ENCODE measurements at regions of chr10 and their contacts with region 1.

Region 1: GRCh38 chr10:29865700-29866340 is 193.6 kb downstream of the JCAD start:
- DNase-seq: no peak
- ATAC-seq: no peak

Region 2: DNA sequence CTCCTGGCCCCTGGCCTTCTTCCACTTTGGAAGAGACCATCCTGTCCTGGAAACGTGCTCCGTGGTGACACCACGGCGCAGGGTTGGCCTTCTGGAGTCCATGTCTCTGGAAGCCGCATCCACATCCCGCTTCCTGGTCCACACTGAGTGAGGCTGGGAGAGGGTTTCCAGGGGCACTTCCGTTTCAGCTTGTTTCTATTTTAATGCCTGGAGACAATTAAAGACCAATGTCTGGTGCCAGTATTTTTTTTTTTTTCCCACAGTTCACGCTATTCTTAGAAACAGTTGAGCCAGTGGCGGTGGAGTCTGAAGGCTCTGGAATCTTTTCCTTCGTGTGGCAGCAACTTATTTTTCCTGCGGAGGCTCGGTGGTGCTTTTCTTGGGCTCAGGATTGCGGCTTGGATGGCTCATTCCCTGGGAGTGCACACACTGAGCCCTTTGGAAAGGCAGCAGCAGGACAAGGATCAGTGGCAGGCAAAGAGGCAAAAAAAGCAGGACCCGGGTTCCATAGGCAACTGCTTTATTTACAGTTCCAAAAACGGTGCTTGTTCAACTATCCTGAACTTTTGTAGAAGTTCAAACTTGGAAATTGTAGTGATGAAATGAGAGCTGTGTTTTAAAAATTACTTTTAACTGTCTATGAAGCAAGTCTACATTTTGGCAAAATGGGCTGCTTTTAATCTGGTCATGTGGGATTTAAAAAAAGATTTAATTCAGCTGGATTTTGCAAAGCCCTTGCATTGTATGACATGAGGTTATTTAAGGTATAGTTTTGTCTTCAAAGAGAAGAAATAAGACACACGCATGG is 985.7 kb before region 1 on chr10:
- intact Hi-C with region 1: loop called (anchors 5 kb)
- DNase-seq: no peak
- ATAC-seq: peak; percentile 64

Measured in sciatic nerve (tissue), 2 donors.